ENCODE measurements at regions of chr6 and their contacts with region 1.

Region 1: DNA sequence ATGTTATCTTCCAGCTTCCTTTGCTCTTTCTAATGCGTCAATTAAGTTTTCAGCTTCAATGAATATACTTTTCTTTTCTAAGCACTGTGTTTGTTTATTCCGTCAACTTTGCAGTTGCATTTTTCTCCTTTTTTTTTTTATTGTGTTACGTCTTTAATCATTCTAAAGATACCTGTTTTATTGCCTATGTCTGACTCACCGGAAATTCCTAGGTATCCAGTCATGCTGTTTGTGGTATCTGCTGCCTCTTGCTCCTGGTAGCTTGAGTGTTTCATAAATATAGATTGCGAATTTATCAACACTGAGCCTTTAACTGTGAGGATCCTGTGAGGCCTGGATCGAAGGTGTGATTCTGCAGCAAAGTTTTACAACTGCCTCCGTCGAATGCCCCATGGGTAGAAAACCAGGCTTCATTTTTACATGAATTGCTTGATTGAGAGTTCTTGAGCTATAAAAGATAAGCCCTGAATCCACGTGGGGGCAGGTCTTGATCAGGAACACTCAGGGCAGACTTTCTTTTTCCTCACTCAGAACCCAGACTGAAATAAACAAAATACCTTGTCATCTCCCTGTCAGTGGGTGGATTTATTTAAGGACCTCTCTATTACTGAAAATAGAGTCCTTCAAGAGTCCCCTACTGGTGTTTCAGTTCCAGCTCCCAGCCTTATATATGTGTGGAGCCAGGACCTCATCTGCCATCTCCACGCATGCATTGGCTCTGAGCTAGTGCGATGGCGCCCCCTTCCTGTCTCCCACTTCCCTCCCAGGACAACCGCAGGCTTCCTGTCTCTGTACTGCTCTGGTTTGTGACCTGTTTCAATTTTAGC is 60.1 kb upstream of the LRRC1 start:
- H3K4me3 ChIP-seq: peak overlapping the region; percentile 10; the same call in 1 of the 2 replicates
- H3K27ac ChIP-seq: peak overlapping the region; percentile 29; the same call in 1 of the 2 replicates
- H3K4me1 ChIP-seq: peaks cover 6% of the 10 kb centered on the region; the same call in 1 of the 2 replicates
- CTCF ChIP-seq: no peak

Region 2: DNA sequence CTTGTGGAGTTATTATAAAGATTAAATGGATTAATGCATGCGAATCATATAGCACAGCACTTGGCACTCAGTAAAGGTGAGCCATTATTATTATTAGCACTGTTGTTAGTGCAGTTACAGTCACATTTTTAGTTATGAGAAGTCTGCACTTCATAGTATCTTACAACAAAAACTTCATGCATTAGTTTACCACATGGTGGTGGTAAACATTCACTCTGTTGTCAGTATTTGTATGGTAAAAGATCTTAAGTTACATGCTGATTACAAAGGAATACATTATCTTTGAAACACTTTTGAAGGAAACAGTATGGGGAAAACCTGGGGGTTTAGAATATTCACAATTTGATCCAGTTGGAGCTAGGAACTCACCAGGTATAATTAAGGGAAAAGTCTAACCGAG is 1043.0 kb before region 1 on chr6:
- CTCF ChIA-PET with region 1: no interaction called
- POLR2A ChIA-PET with region 1: no interaction called
- H3K4me3 ChIP-seq: no peak overlapping the region
- H3K27ac ChIP-seq: no peak overlapping the region
- H3K4me1 ChIP-seq: no peaks in the 10 kb centered on the region
- CTCF ChIP-seq: no peak

Region 3: DNA sequence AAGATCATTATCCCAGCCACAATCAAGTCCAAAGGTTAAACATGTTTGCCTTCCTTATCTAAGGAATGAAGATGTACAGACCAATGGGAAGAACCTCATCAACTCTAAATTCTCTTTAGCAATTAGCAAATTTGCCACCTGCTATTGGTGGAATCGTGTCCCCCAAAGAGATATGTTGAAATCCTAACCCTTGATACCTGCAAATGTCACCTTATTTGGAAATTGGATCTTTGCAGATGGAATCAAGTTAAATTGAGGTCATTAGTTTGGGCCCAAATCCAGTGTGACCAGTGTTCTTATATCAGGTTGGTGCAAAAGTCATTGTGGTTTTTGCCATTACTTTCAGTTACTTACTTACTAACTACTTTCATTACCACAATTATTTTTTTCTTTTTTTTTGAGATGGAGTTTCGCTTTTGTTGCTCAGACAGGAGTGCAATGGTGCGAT is 100.5 kb before region 1 on chr6:
- CTCF ChIA-PET with region 1: no interaction called
- POLR2A ChIA-PET with region 1: no interaction called
- H3K4me3 ChIP-seq: no peak overlapping the region
- H3K27ac ChIP-seq: no peak overlapping the region
- H3K4me1 ChIP-seq: peaks cover 4% of the 10 kb centered on the region; the same call in 1 of the 2 replicates
- CTCF ChIP-seq: no peak

Region 4: DNA sequence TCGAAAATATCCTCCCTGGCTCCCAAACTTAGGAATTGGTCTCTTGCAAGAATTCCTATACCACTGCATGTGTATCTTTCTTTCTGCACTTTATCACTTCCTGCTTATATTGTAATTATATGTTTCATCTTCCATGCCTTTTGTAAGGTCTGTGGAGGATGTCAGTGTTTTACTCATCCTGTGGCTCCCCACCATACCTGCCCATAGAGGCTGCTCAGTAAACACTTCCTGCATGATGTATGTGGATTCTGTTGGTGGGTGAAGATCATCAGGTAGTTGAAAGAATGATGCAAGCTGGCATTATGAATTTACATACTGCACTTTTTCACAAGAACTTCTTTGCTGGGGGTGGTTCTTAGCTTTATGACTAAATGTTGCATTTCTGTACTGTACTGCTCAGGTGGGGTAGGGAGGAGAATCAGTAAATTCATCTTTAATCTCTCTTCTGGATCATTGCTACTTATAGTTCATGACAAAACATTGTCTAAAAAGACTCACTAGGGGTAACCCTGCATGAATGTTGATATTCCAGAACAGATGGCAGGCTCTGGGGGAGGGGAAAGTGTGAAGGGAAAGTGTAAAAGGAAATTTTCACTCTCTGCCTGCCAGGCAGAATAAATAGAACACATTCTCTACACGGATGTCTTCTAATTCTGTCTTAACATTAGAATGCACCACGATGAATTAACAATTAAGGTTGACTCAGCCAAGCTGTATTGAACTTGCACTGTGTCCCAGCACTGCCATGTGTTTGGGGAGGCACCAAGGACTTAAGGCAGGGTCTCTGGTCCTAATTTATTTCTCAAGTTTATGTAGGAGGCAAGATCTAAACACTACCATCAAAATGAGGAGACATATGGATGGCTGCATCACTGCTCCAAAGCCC is 33.1 kb before region 1 on chr6:
- CTCF ChIA-PET with region 1: interaction called, 10 read pairs
- POLR2A ChIA-PET with region 1: no interaction called
- H3K4me3 ChIP-seq: no peak overlapping the region
- H3K27ac ChIP-seq: no peak overlapping the region
- H3K4me1 ChIP-seq: no peaks in the 10 kb centered on the region
- CTCF ChIP-seq: no peak

Region 5: DNA sequence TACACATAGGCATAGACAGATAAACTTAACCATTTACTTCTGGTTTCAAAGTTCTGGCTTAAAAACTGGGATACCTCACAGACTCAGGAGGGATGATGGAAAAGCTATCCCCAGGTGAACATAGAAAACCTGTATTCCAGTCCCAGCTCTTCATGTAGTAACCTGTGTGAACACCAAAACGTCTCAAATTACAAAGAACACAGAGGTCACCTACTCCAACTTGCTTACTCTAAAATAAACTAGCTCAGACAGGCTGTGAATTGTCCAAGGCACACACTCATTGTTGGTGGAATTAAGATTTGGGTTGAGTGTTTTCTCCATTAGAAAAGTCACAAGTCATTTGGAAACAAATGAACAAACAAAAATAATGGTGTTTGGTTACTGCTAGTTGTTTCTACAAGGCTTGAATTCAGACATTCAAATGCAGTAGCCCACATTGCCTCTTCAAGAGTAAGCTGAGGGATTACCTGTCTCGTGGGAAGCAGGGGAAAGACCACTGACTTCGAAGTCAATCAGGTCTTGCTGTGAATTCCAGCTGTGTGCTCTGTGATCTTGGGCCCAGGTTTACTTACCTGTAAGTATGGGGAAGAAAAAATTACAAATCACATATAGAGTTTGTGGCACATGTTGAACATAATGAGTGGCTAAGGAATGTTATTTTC is 11.9 kb after region 1 on chr6:
- CTCF ChIA-PET with region 1: interaction called, 24 read pairs
- POLR2A ChIA-PET with region 1: interaction called, 6 read pairs
- H3K4me3 ChIP-seq: no peak overlapping the region
- H3K27ac ChIP-seq: no peak overlapping the region
- H3K4me1 ChIP-seq: no peaks in the 10 kb centered on the region
- CTCF ChIP-seq: no peak

Region 6: GRCh38 chr6:53752856-53753255 is 18.2 kb after region 1 on chr6:
- CTCF ChIA-PET with region 1: interaction called, 15 read pairs
- POLR2A ChIA-PET with region 1: interaction called, 6 read pairs
- H3K4me3 ChIP-seq: no peak overlapping the region
- H3K27ac ChIP-seq: no peak overlapping the region
- H3K4me1 ChIP-seq: no peaks in the 10 kb centered on the region
- CTCF ChIP-seq: no peak

Region 7: GRCh38 chr6:53794720-53795253 is 60.1 kb after region 1 on chr6 and contains the start of gene LRRC1:
- CTCF ChIA-PET with region 1: interaction called, 76 read pairs
- POLR2A ChIA-PET with region 1: interaction called, 34 read pairs
- H3K4me3 ChIP-seq: peak within 1 kb of the TSS; percentile 77
- H3K27ac ChIP-seq: peak within 1 kb of the TSS; percentile 86
- H3K4me1 ChIP-seq: peaks cover 18% of the 10 kb centered on the region
- CTCF ChIP-seq: no peak; the same call in 1 of the 2 replicates

Region 8: GRCh38 chr6:53956068-53956711 is 221.5 kb after region 1 on chr6:
- CTCF ChIA-PET with region 1: interaction called, 190 read pairs
- POLR2A ChIA-PET with region 1: interaction called, 5 read pairs
- H3K4me3 ChIP-seq: no peak overlapping the region
- H3K27ac ChIP-seq: no peak overlapping the region
- H3K4me1 ChIP-seq: no peaks in the 10 kb centered on the region
- CTCF ChIP-seq: peak; percentile 85; the same call in 1 of the 2 replicates

Region 9: DNA sequence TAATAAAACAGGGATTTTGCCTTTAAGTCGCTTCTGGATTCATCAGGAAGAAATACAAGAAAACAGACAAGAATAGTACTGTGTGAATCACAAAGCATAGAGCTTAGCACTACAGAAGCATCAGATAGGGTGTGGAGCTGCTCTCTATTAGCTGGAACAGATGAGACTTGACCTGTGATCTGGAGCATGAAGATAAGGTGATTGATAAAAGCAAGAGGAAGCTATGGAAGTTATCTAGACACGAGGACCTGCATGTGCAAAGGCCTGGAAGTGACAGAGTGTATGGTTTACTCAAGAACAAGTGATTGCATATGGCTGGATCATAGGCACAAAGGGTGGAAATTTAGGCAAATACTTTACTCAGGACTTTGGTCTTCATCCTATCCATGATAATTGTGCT is 263.6 kb after region 1 on chr6:
- CTCF ChIA-PET with region 1: no interaction called
- POLR2A ChIA-PET with region 1: no interaction called
- H3K4me3 ChIP-seq: no peak overlapping the region
- H3K27ac ChIP-seq: no peak overlapping the region
- H3K4me1 ChIP-seq: no peaks in the 10 kb centered on the region
- CTCF ChIP-seq: no peak

Region 10: DNA sequence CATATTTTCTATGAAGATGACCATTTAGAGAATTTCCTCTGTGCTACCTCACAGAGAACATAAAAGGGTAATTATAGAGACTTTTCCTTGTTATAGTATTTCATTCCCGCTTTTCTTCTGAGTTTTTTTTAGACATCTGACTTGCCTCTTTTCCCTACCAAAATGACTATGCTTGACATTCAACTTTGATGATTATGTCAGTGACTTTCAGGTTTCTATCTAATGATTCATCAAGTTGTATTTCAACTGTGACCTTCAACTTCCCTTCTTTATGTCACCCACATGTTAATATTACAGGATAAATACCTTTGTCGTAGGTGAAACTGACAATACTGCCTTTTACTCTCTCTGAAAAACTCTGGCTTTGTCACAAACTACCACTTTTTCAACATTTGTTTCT is 471.8 kb after region 1 on chr6:
- CTCF ChIA-PET with region 1: no interaction called
- POLR2A ChIA-PET with region 1: no interaction called
- H3K4me3 ChIP-seq: no peak overlapping the region
- H3K27ac ChIP-seq: no peak overlapping the region
- H3K4me1 ChIP-seq: no peaks in the 10 kb centered on the region
- CTCF ChIP-seq: no peak

Measured in HEK293 (cell line).